ENCODE measurements at regions of chr12 and their contacts with region 1.

Region 1: GRCh38 chr12:4763549-4763948 is 43.3 kb downstream of the GALNT8 start:
- DNase-seq: no peak
- ATAC-seq: no peak
- H3K4me3 ChIP-seq: no peak overlapping the region
- H3K27ac ChIP-seq: no peak overlapping the region
- H3K4me1 ChIP-seq: no peaks in the 10 kb centered on the region
- H3K27me3 ChIP-seq: no peaks in the 10 kb centered on the region
- CTCF ChIP-seq: no peak
- EP300 ChIP-seq: no peak
- POLR2A ChIP-seq: no peak
- RAD21 ChIP-seq: no peak

Region 2: DNA sequence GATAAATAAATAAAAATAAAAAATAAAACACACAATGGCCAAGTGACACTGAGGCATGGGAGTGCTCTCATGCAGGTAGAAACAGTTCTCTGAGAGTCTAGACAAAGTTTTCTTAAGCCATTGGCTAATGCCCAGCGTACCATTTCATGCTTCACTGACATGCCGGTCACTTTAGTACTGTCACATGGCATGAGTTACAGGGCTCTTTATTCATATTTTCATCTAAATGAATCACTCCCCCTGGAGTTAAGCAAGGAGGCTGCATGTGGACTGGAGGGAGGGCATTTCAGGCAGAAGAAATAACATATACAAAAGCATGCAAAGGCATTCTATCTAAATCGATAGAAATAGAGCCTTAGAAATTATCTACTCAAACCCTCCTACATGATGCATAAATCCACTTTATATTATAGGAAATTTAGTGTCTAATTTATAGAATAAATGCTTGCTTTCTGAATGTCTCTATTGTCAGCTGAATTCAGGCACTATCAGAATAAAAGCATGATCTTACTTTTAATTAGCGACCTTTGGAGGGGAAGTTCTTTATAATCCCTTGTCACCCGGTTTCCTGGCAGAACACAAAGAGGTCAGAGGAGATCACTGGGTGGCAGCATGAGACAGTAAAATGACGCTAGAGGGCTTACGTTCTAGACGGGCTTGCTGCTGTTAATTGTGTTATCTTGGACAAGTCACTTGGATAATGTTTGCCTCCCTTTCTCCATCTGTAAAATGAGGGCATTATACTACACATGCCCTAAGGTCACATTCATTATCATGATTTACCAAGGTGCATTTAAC is 184.0 kb before region 1 on chr12:
- CTCF ChIA-PET with region 1: interaction called, 8 read pairs
- POLR2A ChIA-PET with region 1: no interaction called
- RAD21 ChIA-PET with region 1: interaction called, 5 read pairs
- SMC1A ChIA-PET with region 1: no interaction called
- in situ Hi-C with region 1: loop called (anchors 5 kb)
- intact Hi-C with region 1: loop called (anchors 2 kb)
- DNase-seq: no peak
- ATAC-seq: peak; percentile 65
- H3K4me3 ChIP-seq: no peak overlapping the region
- H3K27ac ChIP-seq: no peak overlapping the region
- H3K4me1 ChIP-seq: no peaks in the 10 kb centered on the region
- H3K27me3 ChIP-seq: no peaks in the 10 kb centered on the region
- CTCF ChIP-seq: peak; percentile 23 to 45 (median 40); a peak in 4 of 6 replicates
- EP300 ChIP-seq: no peak
- POLR2A ChIP-seq: no peak
- RAD21 ChIP-seq: peak; percentile 50

Region 3: DNA sequence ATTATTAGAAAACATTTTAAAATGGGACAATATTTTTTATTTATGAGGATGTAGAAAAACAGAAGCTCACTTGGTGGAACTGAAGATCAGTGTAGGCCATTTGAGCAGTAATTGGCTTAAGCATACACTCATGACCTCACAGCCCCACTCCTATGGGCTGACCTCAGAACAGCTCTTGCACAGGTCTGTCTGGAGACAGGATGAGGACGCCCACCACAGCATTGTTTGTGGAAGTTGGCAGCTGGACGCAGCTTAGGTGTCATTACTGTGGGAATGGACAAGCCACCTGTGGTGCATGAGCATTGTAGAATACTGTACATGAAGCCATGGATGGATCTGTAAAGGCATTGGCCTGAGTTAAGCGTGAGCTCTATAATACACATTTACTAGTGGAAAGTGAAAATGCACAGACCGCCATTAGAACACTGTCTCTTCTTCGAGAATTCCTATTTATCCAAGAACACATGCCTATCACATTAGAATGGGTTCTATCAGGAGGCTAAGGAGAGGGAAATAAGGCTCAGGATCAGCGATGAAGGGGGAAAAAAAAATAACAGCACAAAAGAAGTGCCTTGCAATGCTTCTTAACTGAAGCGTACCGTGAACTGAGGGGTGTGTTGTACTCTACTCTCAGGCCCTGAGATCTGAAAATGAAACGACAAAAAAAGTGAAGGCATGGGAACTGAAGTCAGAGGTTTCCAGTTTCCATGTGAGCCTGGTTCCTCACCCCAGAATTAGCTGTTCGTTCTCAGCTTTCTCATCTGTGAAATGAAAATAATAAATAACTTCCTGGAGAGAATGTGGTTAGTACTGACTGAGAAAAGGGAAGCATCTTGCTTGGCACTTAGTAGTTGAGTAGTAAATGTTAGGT is 179.8 kb after region 1 on chr12:
- CTCF ChIA-PET with region 1: no interaction called
- POLR2A ChIA-PET with region 1: no interaction called
- RAD21 ChIA-PET with region 1: no interaction called
- SMC1A ChIA-PET with region 1: no interaction called
- in situ Hi-C with region 1: no loop called
- intact Hi-C with region 1: no loop called
- DNase-seq: peak; percentile 94
- ATAC-seq: peak; percentile 95
- H3K4me3 ChIP-seq: peak overlapping the region; percentile 48; the same call in 1 of the 2 replicates
- H3K27ac ChIP-seq: peak overlapping the region; percentile 94
- H3K4me1 ChIP-seq: peaks cover 32% of the 10 kb centered on the region
- H3K27me3 ChIP-seq: no peaks in the 10 kb centered on the region
- CTCF ChIP-seq: no peak
- EP300 ChIP-seq: no peak
- POLR2A ChIP-seq: no peak
- RAD21 ChIP-seq: 0 out of 2 replicates have a peak, but pooled peaks have one; percentile 5